Activated CD4-positive, alpha-beta T cell treated with anti-CD3 and anti-CD28 coated beads, Interleukin-2, amount 10 ng/mL, durations not matched to agents 24 days and 14 days (primary cell): ENCODE measurements at regions of chr22 and their contacts with region 1.

Region 1: DNA sequence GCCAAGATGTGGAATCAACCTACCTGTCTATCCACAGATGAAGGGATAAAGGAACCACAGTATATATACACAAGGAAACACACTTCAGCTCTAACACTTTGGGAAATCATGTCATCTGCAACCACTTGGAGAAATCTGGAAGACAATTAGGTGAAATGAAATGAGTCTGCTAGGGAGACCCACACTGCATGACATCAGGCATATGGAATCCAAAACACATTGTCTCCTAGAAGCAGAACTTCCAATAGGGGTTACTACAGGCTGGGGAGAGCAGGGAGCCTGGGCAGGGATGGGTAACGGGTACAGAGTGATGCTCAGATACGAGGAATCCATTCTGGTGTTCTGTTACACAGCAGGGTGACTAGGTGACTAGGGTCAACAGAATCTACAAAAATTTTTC is 18.3 kb downstream of the RGL4 start:
- DNase-seq: no peak
- H3K4me3 Mint-ChIP-seq: no peak overlapping the region
- H3K27ac Mint-ChIP-seq: no peak overlapping the region
- H3K4me1 Mint-ChIP-seq: peaks cover 51% of the 10 kb centered on the region
- H3K27me3 Mint-ChIP-seq: no peaks in the 10 kb centered on the region

Region 2: DNA sequence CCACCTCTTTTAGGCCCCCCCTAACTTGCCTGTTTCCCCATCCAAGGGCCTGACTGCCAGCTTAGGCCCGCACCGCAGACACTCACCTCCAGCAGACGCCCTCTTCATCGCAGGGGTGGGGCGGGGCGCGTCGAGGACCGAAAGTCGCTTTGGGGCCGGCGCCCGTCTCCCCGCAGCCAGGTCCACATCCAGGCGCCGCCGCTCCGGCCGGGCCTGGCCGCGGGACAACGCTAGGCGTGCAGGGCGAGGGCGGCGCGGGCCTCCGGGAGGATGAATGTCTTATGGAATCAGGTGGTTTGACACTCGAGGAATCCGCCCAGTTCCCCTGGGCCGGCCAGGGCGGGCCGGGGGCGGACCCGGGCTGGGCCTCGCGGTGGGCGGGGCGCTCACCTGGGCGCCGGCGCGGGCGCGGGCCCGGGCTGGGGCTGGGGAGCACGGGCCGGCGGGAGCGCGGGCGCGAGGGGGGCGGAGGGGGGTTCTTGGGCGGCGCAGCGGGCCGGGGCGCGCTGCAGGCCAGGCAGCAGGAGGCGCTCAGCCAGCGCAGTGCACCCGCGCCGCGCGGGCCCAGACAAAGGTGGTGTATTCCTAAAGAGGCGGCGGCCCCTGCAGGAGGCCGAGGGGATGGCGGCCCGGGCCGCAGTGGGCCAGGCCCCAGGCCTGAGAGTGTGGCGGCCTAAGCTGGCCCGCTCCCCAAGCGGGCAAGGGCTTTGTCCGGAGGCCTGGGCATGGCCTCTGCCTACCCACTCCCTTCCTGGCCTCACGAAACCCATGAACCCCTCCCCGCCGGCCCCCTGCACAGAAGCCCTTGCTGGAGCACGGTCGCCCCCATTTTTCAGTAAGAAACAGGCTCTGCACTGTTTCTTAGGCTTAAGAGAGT is 306.6 kb before region 1 on chr22:
- intact Hi-C with region 1: no loop called
- DNase-seq: peak; percentile 82
- H3K4me3 Mint-ChIP-seq: no peak overlapping the region
- H3K27ac Mint-ChIP-seq: no peak overlapping the region
- H3K4me1 Mint-ChIP-seq: no peaks in the 10 kb centered on the region
- H3K27me3 Mint-ChIP-seq: peaks cover 4% of the 10 kb centered on the region

Region 3: GRCh38 chr22:23639661-23640060 is 69.4 kb before region 1 on chr22:
- intact Hi-C with region 1: no loop called
- DNase-seq: no peak
- H3K4me3 Mint-ChIP-seq: no peak overlapping the region
- H3K27ac Mint-ChIP-seq: no peak overlapping the region
- H3K4me1 Mint-ChIP-seq: no peaks in the 10 kb centered on the region
- H3K27me3 Mint-ChIP-seq: no peaks in the 10 kb centered on the region

Region 4: GRCh38 chr22:23696326-23696851 is 12.7 kb before region 1 on chr22:
- intact Hi-C with region 1: loop called (anchors 1 kb)
- DNase-seq: peak; percentile 94
- H3K4me3 Mint-ChIP-seq: peak overlapping the region; percentile 95
- H3K27ac Mint-ChIP-seq: peak overlapping the region; percentile 100
- H3K4me1 Mint-ChIP-seq: peaks cover 44% of the 10 kb centered on the region
- H3K27me3 Mint-ChIP-seq: no peaks in the 10 kb centered on the region

Region 5: DNA sequence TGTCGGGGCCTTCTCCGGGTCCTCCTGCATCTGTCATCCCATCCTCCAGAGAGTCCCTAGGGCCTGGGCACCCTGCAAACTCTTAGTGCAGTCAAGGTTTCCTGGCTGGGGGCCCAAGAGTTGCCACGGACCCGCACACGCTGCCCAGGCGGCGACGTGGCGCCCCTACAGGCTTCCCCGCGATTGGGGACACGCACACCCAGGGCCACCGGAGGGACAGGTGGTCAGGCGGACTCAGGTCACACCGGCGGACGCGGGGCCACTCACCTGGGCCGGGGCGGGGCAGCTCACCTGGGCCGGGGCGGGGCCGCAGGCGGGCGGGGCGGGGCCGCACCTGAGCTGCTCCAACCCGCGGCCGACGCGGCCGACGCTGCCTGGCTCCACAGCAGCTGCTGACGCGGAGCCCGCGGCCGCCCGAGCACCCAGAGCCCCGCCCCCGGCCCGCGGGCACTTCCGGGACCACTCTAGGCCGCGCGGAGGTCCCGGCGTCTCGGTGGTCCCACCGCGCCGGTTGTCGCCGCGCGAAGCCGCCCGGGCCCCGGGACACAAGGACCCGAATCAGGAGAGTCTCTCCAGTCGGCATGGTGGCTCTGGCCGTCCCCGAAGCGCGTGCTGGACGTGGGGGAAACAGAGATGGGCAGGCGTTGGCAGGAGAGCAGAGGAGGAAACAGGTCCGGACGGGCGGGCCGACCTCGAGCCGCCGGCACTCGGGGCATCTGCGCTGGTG is 41.8 kb after region 1 on chr22 and contains the start of gene ZNF70:
- intact Hi-C with region 1: loop called (anchors 5 kb)
- DNase-seq: peak; percentile 95
- H3K4me3 Mint-ChIP-seq: peak within 1 kb of the TSS; percentile 85
- H3K27ac Mint-ChIP-seq: peak within 1 kb of the TSS; percentile 77
- H3K4me1 Mint-ChIP-seq: peaks cover 15% of the 10 kb centered on the region
- H3K27me3 Mint-ChIP-seq: peaks cover 5% of the 10 kb centered on the region
- total RNA-seq, gene ZNF70: 2.5 and 2.6 TPM in 2 replicates